Esophagus squamous epithelium (tissue), 5 donors: ENCODE measurements at regions of chr10 and their contacts with region 1.

Region 1: GRCh38 chr10:101141616-101142532 is 10.8 kb downstream of the TLX1 start:
- DNase-seq: no peak
- H3K4me3 ChIP-seq: peak overlapping the region in 1 of 4 donors; percentile 32
- H3K27ac ChIP-seq: no peak overlapping the region
- H3K4me1 ChIP-seq: peaks cover 0 to 44% (median 26%) of the 10 kb centered on the region in 3 donors
- H3K27me3 ChIP-seq: peaks cover 26 to 100% (median 69%) of the 10 kb centered on the region in 4 donors
- CTCF ChIP-seq: peak; percentile 82 to 96 (median 92)
- POLR2A ChIP-seq: no peak

Region 2: DNA sequence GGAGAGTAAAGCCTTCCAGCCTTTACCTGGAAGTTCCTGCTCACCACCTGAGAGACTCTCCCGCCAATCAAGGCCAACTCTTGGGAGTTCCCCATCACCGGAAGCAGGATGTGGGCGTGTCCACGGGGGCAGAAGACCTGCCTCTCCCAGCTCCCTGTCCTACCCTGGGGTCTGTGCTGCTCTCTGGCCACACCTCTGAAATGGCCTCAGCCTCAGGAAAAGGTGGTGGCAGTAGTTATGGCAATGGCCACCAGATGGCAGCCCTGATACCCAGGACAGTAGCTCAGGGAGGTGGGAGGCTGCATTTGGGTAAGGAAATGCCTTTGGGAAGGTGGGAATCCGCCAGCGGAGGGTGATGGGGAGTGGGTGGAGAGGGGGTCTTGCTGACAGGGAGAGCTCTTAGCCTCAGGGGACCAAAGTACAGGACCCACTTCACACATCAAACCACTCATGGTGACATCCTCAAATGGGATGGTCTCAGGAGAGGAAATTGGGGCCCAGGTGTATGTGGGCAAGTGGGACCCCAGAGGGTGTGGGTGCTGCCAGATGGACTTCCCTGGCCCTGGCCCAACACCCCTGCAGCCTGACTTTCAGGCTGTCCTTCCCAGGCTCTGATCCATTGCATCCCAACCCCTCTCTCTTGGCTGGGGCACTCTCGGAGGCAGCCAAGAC is 46.2 kb before region 1 on chr10:
- intact Hi-C with region 1: loop called (anchors 5 kb)
- DNase-seq: no peak
- H3K4me3 ChIP-seq: no peak overlapping the region
- H3K27ac ChIP-seq: no peak overlapping the region
- H3K4me1 ChIP-seq: peaks cover 0 to 8% (median 4%) of the 10 kb centered on the region in 3 donors
- H3K27me3 ChIP-seq: peaks cover 0 to 100% (median 0%) of the 10 kb centered on the region in 4 donors
- CTCF ChIP-seq: peak; percentile 47 to 85 (median 77)
- POLR2A ChIP-seq: no peak